ENCODE measurements at regions of chr10 and their contacts with region 1.

Region 1: GRCh38 chr10:76150876-76151288 is 719.5 kb downstream of the LRMDA start:
- DNase-seq: no peak
- ATAC-seq: no peak
- H3K4me3 ChIP-seq: no peak overlapping the region
- H3K27ac ChIP-seq: no peak overlapping the region
- H3K4me1 ChIP-seq: no peaks in the 10 kb centered on the region
- H3K27me3 ChIP-seq: no peaks in the 10 kb centered on the region
- CTCF ChIP-seq: no peak

Region 2: GRCh38 chr10:75814014-75814413 is 336.9 kb before region 1 on chr10:
- CTCF ChIA-PET with region 1: no interaction called
- POLR2A ChIA-PET with region 1: no interaction called
- in situ Hi-C with region 1: no loop called
- intact Hi-C with region 1: no loop called
- DNase-seq: no peak
- ATAC-seq: no peak
- H3K4me3 ChIP-seq: no peak overlapping the region
- H3K27ac ChIP-seq: no peak overlapping the region
- H3K4me1 ChIP-seq: no peaks in the 10 kb centered on the region
- H3K27me3 ChIP-seq: peaks cover 10% of the 10 kb centered on the region
- CTCF ChIP-seq: no peak

Region 3: DNA sequence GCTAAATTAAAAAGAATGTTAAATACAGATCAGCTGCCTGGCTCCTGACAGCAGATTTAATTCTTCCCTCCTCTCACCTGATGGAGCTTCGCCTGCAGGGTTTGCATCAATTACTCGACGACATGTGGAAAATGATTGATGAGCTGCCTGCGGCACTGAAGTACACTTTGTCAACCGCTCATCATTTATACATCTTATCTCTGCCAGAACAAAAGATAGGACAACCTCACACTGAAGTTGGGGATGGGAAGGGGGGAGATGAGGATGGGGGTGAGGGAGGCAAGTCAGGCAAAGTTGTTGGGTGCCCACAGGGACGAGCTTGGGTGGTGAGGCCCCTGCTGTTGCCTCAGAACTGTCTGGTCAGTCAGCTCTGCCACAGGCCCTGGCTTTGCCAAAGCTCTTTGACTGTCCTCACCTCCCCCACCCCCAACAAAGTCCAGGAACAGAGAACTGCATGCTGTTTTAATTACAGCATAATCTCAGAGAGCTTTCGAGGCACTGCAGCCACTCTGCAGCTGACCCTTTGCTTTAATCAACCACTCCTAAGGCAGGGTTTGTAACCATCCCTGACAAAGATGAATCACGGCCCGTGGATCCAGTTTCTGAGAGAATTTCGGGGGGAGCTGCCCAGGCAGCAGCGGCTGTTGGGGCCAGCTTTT is 17.2 kb before region 1 on chr10:
- CTCF ChIA-PET with region 1: no interaction called
- POLR2A ChIA-PET with region 1: no interaction called
- in situ Hi-C with region 1: no loop called
- intact Hi-C with region 1: loop called (anchors 1 kb)
- DNase-seq: no peak
- ATAC-seq: no peak
- H3K4me3 ChIP-seq: no peak overlapping the region
- H3K27ac ChIP-seq: no peak overlapping the region
- H3K4me1 ChIP-seq: no peaks in the 10 kb centered on the region
- H3K27me3 ChIP-seq: no peaks in the 10 kb centered on the region
- CTCF ChIP-seq: no peak